MCF 10A (cell line): ENCODE measurements at regions of chr13 and their contacts with region 1.

Region 1: DNA sequence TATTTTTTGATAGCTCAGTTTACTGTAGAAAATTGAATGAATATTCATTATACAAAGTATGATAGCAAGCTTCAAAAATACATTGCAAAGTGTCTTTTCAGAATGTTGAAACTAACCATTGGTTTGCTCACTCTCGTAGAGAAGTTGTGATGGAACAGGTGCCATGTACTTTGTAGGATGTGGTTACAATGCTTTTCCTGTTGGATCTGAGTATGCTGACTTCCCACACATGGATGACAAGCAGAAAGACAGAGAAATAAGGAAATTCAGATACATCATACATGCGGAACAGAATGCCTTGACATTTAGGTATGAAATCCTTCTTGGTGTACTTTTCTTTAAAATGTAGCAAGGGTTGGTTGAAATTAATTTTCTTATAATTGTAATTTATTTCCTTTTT is 30.5 kb downstream of the CDADC1 start:
- DNase-seq: no peak
- H3K4me3 Mint-ChIP-seq: no peak overlapping the region
- H3K27ac Mint-ChIP-seq: no peak overlapping the region
- H3K4me1 Mint-ChIP-seq: no peaks in the 10 kb centered on the region
- H3K27me3 Mint-ChIP-seq: no peaks in the 10 kb centered on the region
- CTCF ChIP-seq: no peak

Region 2: DNA sequence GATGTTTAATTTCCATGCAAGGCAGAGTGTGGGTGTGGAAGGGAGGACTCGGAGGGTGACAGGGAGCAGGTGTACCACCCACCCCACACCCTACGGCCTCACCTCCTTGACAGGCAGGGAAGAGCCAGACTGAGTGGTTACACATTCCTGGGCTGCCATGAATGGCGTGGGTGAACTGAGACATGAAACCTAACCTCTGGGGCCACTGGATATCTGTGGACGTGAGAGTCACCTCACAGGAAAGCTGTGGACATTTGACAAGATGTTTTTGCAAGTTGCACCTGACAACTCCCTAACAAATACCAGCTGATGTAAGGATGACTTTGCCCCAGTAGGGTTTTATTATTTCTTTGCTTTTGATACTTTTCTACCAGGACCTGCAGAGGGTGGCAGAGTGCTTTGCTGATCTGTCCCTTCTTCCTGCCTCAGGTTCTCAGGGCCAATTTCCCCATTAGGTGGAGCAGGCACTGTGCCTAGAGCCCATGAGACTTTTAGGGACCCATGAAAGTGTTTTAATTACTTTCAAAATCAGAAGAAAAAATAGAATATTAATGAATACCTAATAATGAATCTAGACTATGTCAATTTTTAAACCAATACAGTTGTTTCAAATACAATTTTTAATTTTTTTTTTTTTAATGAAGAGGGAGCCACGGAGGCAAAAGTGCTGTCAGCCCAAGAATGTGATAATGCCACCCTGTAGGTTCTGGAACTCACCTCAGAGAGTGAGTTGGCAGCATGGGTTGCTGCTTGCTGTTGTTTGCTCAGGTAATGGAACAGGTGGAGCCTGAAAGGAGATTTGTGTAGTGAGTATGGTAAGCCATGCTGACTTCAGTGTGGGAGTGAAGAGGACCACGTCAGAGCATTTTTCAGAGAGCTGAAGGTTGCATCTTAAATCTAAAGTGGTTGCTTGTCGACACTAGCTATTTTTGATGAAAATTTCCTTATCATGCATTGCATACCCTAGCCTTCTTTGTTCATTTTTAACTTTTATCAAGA is 682.5 kb before region 1 on chr13:
- CTCF ChIA-PET with region 1: interaction called, 7 read pairs
- POLR2A ChIA-PET with region 1: no interaction called
- intact Hi-C with region 1: loop called (anchors 1 kb)
- DNase-seq: peak; percentile 70
- H3K4me3 Mint-ChIP-seq: no peak overlapping the region
- H3K27ac Mint-ChIP-seq: no peak overlapping the region
- H3K4me1 Mint-ChIP-seq: no peaks in the 10 kb centered on the region
- H3K27me3 Mint-ChIP-seq: no peaks in the 10 kb centered on the region
- CTCF ChIP-seq: peak; percentile 66

Region 3: DNA sequence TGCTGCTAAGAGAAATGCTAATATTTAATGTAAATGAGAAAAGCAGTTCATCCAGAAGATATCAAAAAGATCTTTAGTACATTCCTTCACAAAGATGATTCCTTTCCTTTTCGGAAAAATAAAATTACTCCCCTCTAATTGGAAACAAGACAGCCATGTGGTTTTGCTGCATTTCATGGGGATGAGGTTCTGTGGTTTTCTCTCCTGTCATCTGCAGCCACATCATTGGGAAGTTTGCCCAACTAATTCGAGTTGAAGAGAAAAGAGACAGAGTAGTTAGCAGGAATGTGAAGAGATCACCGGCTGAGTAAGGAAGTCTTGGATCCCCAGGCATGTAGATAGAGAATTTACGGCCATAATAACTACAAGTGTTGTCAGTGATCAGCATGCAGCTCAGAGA is 502.4 kb before region 1 on chr13:
- CTCF ChIA-PET with region 1: interaction called, 7 read pairs
- POLR2A ChIA-PET with region 1: no interaction called
- intact Hi-C with region 1: loop called (anchors 10 kb)
- DNase-seq: peak; percentile 62
- H3K4me3 Mint-ChIP-seq: no peak overlapping the region
- H3K27ac Mint-ChIP-seq: no peak overlapping the region
- H3K4me1 Mint-ChIP-seq: peaks cover 6% of the 10 kb centered on the region
- H3K27me3 Mint-ChIP-seq: no peaks in the 10 kb centered on the region
- CTCF ChIP-seq: no peak

Region 4: GRCh38 chr13:49046002-49046401 is 232.2 kb before region 1 on chr13:
- CTCF ChIA-PET with region 1: no interaction called
- POLR2A ChIA-PET with region 1: no interaction called
- intact Hi-C with region 1: no loop called
- DNase-seq: no peak
- H3K4me3 Mint-ChIP-seq: no peak overlapping the region
- H3K27ac Mint-ChIP-seq: no peak overlapping the region
- H3K4me1 Mint-ChIP-seq: peaks cover 6% of the 10 kb centered on the region
- H3K27me3 Mint-ChIP-seq: no peaks in the 10 kb centered on the region
- CTCF ChIP-seq: no peak

Region 5: GRCh38 chr13:49240017-49240416 is 38.2 kb before region 1 on chr13:
- CTCF ChIA-PET with region 1: interaction called, 7 read pairs
- POLR2A ChIA-PET with region 1: no interaction called
- intact Hi-C with region 1: loop called (anchors 1 kb)
- DNase-seq: peak; percentile 57
- H3K4me3 Mint-ChIP-seq: no peak overlapping the region
- H3K27ac Mint-ChIP-seq: no peak overlapping the region
- H3K4me1 Mint-ChIP-seq: no peaks in the 10 kb centered on the region
- H3K27me3 Mint-ChIP-seq: no peaks in the 10 kb centered on the region
- CTCF ChIP-seq: peak; percentile 38

Region 6: GRCh38 chr13:49247643-49248621 is 30.3 kb before region 1 on chr13 and contains the start of gene CDADC1:
- CTCF ChIA-PET with region 1: interaction called, 7 read pairs
- POLR2A ChIA-PET with region 1: interaction called, 10 read pairs
- intact Hi-C with region 1: no loop called
- DNase-seq: peak; percentile 95
- H3K4me3 Mint-ChIP-seq: peak within 1 kb of the TSS; percentile 96
- H3K27ac Mint-ChIP-seq: peak within 1 kb of the TSS; percentile 97
- H3K4me1 Mint-ChIP-seq: peaks cover 6% of the 10 kb centered on the region
- H3K27me3 Mint-ChIP-seq: no peaks in the 10 kb centered on the region
- CTCF ChIP-seq: no peak
- total RNA-seq, gene CDADC1: 8.0 and 9.4 TPM in 2 replicates

Region 7: GRCh38 chr13:49292742-49293486 is 14.7 kb after region 1 on chr13:
- CTCF ChIA-PET with region 1: interaction called, 13 read pairs
- POLR2A ChIA-PET with region 1: no interaction called
- intact Hi-C with region 1: no loop called
- DNase-seq: no peak
- H3K4me3 Mint-ChIP-seq: no peak overlapping the region
- H3K27ac Mint-ChIP-seq: no peak overlapping the region
- H3K4me1 Mint-ChIP-seq: no peaks in the 10 kb centered on the region
- H3K27me3 Mint-ChIP-seq: no peaks in the 10 kb centered on the region
- CTCF ChIP-seq: no peak